Activated T-helper 2 cell treated with anti-CD3 and anti-CD28 coated beads, Interferon-gamma antibody, Interleukin-2, Interleukin-4, amounts not matched to agents 10 μg/mL and 5 μg/mL and 100 μg/mL, durations not matched to agents 14 hours and 24 hours and 36 hours (primary cell): ENCODE measurements at regions of chr2 and their contacts with region 1.

Region 1: GRCh38 chr2:136327162-136327852 is 209.4 kb upstream of the CXCR4 start:
- DNase-seq: peak; percentile 76
- H3K4me3 Mint-ChIP-seq: peak overlapping the region; percentile 57
- H3K27ac Mint-ChIP-seq: peak overlapping the region; percentile 93
- H3K4me1 Mint-ChIP-seq: peaks cover 62% of the 10 kb centered on the region
- H3K27me3 Mint-ChIP-seq: no peaks in the 10 kb centered on the region

Region 2: DNA sequence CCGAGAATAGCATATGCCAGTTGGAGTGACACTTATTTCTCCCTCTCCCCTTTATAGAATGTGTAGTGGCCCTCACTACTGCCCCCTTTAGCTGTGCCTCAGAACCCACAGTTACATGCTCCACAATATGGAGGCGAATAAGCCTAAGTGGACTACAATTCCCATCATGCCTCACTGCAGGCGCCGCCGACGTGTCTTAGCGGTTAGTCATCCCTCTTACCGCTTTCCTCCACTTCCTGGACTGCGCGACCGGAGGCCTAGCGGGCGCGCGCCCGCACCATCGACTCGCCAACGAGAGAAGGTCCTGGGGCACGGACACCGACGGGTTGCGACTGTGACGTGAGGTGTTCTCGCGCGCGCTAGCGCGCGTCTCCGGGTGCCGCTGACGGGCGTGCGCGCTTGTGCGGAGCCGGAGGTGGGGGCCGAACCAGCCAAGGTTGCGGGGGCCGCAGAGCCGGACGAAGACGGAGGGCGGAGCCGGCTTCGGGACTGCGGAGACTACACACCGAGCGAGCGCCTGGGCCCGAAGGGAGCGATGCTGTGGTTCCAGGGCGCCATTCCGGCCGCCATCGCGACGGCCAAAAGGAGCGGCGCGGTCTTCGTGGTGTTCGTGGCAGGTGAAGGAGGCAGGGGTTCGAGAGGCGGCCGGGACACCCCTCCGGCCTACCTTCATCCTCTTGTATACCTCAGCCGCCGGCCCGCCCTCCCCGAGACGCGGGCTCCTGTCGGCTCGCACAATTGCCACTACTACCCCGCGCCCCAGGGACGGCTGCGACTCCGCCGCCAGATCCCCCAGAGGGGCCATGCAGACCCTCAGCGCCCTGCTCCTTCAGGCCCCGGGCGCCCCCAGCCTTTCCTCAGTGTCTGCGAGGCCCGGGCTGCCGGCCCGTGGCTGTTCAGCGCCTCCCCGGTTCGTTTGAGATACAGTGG is 585.6 kb before region 1 on chr2 and contains the start of gene UBXN4:
- intact Hi-C with region 1: loop called (anchors 5 kb)
- DNase-seq: peak; percentile 90
- H3K4me3 Mint-ChIP-seq: peak within 1 kb of the TSS; percentile 98
- H3K27ac Mint-ChIP-seq: peak within 1 kb of the TSS; percentile 100
- H3K4me1 Mint-ChIP-seq: peaks cover 34% of the 10 kb centered on the region
- H3K27me3 Mint-ChIP-seq: no peaks in the 10 kb centered on the region
- total RNA-seq, gene UBXN4: 118 and 138 TPM in 2 replicates

Region 3: DNA sequence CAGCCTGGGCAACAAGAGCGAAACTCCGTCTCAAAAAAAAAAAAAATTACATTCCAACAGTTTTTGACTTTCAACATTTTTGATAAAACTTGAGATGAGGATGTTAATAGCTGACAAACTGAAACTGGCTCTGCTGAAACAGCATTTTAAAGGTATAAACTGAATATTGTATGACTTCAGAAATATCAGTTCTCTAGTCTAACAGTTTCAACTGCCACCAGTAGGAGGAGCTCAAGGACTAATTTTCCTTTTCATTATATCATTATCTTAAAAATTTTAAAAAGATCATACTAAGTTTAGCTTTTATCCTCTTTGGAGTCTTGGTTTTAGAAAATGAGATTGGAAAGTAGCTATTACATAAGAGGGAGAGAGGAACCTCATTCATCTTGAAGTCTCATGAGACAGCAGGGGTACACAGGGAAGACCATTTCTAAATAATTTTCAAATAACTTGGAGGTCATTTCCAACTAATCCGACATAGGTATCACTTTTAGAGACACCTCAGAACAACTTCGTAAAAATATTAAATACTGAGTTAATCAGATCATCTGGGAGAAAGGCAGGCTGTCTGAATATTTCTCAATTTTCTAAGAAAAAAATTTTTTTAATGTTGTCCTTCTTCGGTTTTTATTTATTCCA is 413.5 kb before region 1 on chr2:
- intact Hi-C with region 1: loop called (anchors 2 kb)
- DNase-seq: no peak
- H3K4me3 Mint-ChIP-seq: no peak overlapping the region
- H3K27ac Mint-ChIP-seq: peak overlapping the region; percentile 76
- H3K4me1 Mint-ChIP-seq: peaks cover 14% of the 10 kb centered on the region
- H3K27me3 Mint-ChIP-seq: no peaks in the 10 kb centered on the region

Region 4: GRCh38 chr2:136059036-136059472 is 268.3 kb before region 1 on chr2:
- intact Hi-C with region 1: loop called (anchors 1 kb)
- DNase-seq: no peak
- H3K4me3 Mint-ChIP-seq: no peak overlapping the region
- H3K27ac Mint-ChIP-seq: peak overlapping the region; percentile 5
- H3K4me1 Mint-ChIP-seq: peaks cover 56% of the 10 kb centered on the region
- H3K27me3 Mint-ChIP-seq: no peaks in the 10 kb centered on the region

Region 5: DNA sequence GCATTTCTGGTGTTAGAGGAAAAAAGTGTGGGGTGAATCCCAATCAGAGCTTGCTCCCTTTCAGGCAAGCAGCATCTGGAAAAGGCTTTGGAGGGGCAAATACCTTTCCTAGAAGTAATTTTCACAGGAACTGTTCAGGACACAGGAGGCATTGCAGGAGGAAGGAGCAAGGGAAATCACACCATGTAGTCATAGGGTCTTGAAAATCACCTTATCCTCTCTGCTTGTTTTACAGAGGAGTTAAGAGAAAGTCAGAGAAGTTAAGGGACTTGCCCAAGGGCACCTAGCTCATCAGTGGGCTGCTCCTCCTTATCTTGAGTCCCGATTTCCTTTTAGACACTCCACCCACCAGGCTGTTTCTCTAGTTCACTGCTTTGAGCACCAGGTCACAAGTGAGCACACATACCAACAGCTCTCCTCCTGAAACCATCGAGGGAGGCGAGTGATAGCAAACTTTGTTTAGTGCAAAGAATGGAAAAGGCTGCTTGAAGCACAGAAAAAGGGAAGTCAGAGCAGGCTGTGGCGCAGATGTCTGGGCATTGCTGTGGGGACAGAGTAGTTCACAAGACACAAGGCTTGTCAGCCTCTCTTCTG is 120.2 kb before region 1 on chr2:
- intact Hi-C with region 1: loop called (anchors 1 kb)
- DNase-seq: no peak
- H3K4me3 Mint-ChIP-seq: peak overlapping the region; percentile 28
- H3K27ac Mint-ChIP-seq: peak overlapping the region; percentile 85
- H3K4me1 Mint-ChIP-seq: peaks cover 38% of the 10 kb centered on the region
- H3K27me3 Mint-ChIP-seq: no peaks in the 10 kb centered on the region

Region 6: DNA sequence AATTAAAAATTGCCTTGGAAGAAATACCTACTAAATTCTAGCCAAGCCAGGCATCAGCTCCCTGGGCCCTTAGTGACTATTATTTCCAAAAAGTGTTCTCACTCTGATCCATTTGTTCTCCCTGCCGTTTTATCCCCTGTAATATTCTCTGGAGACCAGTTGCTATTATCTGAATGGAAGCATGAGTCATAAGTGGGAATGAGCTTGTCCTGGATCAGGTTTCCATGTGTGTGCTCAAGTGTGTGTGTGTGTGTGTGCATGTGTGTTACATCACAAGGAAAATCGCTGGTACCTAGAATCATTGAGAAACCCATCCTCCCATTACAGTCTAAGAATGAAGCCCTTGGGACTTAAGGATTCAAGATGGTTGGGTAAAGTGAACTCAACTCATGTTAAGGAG is 79.1 kb before region 1 on chr2:
- intact Hi-C with region 1: no loop called
- DNase-seq: no peak
- H3K4me3 Mint-ChIP-seq: no peak overlapping the region
- H3K27ac Mint-ChIP-seq: no peak overlapping the region
- H3K4me1 Mint-ChIP-seq: peaks cover 25% of the 10 kb centered on the region
- H3K27me3 Mint-ChIP-seq: no peaks in the 10 kb centered on the region

Region 7: GRCh38 chr2:136310005-136310495 is 17.3 kb before region 1 on chr2:
- intact Hi-C with region 1: loop called (anchors 1 kb)
- DNase-seq: no peak
- H3K4me3 Mint-ChIP-seq: peak overlapping the region; percentile 41
- H3K27ac Mint-ChIP-seq: peak overlapping the region; percentile 94
- H3K4me1 Mint-ChIP-seq: peaks cover 47% of the 10 kb centered on the region
- H3K27me3 Mint-ChIP-seq: no peaks in the 10 kb centered on the region

Region 8: DNA sequence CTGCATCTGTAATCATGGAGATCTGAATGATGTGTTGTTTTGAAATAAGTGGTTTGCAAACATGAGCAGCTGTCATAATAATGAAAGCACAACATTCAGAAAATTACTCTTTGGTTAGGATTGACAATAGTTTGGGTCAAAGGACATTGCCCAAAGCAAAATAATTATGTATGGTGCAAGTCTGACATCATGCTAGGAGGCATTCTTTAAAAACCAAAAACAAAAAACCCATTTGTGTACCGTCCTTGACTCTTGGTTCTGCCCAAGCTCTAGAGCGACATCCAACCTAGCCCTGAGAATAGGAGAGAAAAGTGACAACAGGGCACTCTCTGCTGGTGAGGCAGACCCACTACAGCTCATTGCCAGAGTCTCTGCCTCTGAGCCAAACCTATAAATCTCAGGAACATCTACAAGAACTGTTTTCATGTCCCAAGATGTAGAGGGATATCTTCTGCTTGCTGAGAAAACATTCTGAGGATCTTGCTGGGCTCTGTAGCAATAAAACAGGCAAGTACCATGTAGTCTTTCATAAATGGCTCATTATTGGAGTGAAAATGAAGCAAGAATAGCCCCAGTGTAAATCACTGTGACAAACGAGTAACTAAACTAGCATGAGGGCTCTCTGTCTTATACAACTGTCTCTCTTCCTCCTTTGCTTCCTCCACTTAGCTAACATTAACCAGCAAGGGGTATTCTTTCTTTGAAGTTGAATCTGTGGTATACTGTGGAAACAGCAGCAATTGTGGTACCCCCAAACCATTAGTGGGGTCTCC is 57.4 kb after region 1 on chr2:
- intact Hi-C with region 1: loop called (anchors 1 kb)
- DNase-seq: peak; percentile 48
- H3K4me3 Mint-ChIP-seq: no peak overlapping the region
- H3K27ac Mint-ChIP-seq: peak overlapping the region; percentile 97
- H3K4me1 Mint-ChIP-seq: peaks cover 47% of the 10 kb centered on the region
- H3K27me3 Mint-ChIP-seq: no peaks in the 10 kb centered on the region

Region 9: DNA sequence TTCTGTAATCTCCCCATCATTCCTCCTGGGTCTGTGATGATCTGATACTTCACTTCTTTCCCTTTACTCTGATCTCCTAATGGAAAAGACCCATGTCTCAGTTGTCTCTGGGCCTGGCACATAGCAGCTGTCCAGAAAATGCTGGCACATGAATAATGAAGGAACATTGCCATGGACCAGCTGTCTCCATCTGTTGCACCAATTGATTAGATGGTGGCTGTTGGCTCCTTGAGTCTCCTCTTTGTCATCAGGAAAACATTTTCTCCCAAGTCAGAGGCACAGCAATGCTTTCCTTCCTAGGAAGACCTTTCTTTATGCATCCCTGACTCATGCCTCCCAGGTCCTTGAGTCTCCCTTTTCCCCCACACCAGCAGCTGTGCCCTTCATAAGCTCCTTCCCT is 76.9 kb after region 1 on chr2:
- intact Hi-C with region 1: no loop called
- DNase-seq: no peak
- H3K4me3 Mint-ChIP-seq: no peak overlapping the region
- H3K27ac Mint-ChIP-seq: no peak overlapping the region
- H3K4me1 Mint-ChIP-seq: peaks cover 2% of the 10 kb centered on the region
- H3K27me3 Mint-ChIP-seq: peaks cover 45% of the 10 kb centered on the region